Activated naive CD4-positive, alpha-beta T cell treated with anti-CD3 and anti-CD28 coated beads for 36 hours (primary cell): ENCODE measurements at regions of chr2 and their contacts with region 1.

Region 1: DNA sequence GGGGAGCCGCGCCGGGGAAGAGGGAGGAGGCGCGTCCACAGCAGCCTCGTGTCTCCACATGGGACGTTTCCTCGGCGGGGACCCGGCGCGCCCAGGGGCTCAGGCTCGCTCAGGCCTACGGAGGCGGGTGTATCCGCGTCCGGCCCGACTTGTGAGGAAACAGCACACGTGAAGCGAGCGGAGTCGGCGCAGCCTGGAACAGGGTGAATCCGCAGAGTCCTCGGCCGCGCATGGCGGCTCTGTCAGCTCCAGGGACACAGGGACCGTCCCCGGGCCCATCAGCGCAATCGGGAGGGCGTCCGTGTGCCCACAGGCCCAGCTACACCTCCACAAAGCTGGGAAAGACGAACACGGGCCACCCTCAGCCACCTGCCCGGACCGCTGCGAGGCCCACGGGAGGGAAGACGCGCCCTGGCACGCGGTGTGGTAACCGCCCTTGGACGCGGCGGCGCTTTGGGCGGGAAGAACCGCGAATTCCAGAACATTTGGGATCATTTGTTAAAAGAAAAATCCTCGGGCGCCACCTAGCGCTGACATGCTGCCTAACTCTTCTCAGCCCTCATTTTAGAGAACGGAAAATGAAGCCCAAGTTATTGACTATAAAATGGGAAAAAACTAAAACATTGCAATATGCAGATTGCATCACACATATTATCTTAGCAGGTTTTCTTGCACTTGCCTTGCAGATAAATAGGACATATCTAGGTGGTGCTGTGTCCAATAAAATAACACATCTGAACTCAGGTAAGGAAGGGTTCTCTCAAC is 40.4 kb downstream of the TMEM18 start:
- DNase-seq: peak; percentile 69
- H3K4me3 Mint-ChIP-seq: peak overlapping the region; percentile 64
- H3K27ac Mint-ChIP-seq: no peak overlapping the region
- H3K4me1 Mint-ChIP-seq: peaks cover 5% of the 10 kb centered on the region
- H3K27me3 Mint-ChIP-seq: no peaks in the 10 kb centered on the region

Region 2: DNA sequence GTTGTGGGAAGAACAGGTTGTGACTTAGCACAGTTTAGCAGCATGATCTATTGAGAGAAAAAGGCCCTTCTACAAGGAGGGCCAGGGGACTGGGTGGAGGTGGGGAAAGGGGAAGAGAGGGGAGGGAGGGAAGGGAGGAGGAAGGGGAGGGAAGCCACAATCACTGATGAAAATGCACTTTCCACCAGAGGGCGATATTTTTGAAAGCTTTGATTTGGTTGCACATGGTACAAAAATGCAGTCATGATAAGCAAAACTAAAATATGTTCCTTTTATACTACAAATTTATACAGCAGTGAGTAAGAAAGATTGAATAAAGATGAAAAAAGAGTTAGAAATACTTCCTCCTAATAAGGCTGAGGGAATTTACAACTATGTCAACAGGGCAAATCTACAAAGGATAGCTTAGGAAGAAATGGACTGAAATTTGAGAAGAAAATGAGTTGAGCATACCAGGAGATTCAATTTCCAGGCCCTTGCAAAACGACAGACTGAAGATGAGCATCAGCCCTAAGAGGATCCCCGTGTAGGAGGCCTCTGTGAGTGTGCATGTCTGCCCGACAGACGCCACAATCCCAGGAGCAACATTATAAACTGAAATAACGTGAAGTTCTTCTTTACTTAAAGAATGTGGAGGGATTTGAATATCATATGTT is 390.2 kb before region 1 on chr2:
- CTCF ChIA-PET with region 1: interaction called, 10 read pairs
- intact Hi-C with region 1: loop called (anchors 1 kb)
- DNase-seq: peak; percentile 51
- H3K4me3 Mint-ChIP-seq: no peak overlapping the region
- H3K27ac Mint-ChIP-seq: no peak overlapping the region
- H3K4me1 Mint-ChIP-seq: peaks cover 5% of the 10 kb centered on the region
- H3K27me3 Mint-ChIP-seq: no peaks in the 10 kb centered on the region

Region 3: DNA sequence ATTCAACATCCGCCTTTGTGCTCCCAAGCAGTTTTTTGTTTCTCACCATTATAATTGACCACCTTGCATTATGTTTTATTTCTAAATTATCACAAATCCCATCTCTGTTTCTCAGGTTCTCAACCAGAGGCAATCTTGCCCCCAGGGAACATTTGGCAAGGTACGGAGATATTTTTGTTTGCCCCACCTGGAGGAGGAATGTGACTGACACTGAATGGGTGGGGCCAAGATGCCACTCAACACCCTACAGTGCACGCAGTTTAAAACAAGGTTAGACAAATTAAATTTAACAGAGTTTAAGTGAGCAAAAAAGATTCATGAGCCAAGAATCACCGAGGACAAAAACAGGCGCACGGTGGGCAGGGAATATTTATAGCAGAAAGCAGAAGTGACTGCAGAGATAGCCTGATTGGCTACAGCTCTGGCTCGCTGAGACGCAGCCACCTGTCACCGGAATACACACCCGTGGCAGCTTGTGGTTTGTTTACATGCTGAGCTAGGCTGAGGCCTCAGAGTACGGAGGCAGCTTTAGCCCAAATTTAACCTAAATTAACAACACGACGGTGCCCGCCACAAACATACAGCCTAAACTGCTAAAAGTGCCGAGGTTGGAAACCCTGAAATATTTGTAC is 198.9 kb before region 1 on chr2:
- CTCF ChIA-PET with region 1: no interaction called
- intact Hi-C with region 1: loop called (anchors 10 kb)
- DNase-seq: peak; percentile 64
- H3K4me3 Mint-ChIP-seq: peak overlapping the region; percentile 65
- H3K27ac Mint-ChIP-seq: no peak overlapping the region
- H3K4me1 Mint-ChIP-seq: peaks cover 9% of the 10 kb centered on the region
- H3K27me3 Mint-ChIP-seq: no peaks in the 10 kb centered on the region

Region 4: GRCh38 chr2:584863-585823 is 51.7 kb before region 1 on chr2:
- CTCF ChIA-PET with region 1: interaction called, 3 read pairs
- intact Hi-C with region 1: loop called (anchors 2 kb)
- DNase-seq: peak; percentile 59
- H3K4me3 Mint-ChIP-seq: peak overlapping the region; percentile 8
- H3K27ac Mint-ChIP-seq: no peak overlapping the region
- H3K4me1 Mint-ChIP-seq: peaks cover 11% of the 10 kb centered on the region
- H3K27me3 Mint-ChIP-seq: peaks cover 9% of the 10 kb centered on the region

Region 5: DNA sequence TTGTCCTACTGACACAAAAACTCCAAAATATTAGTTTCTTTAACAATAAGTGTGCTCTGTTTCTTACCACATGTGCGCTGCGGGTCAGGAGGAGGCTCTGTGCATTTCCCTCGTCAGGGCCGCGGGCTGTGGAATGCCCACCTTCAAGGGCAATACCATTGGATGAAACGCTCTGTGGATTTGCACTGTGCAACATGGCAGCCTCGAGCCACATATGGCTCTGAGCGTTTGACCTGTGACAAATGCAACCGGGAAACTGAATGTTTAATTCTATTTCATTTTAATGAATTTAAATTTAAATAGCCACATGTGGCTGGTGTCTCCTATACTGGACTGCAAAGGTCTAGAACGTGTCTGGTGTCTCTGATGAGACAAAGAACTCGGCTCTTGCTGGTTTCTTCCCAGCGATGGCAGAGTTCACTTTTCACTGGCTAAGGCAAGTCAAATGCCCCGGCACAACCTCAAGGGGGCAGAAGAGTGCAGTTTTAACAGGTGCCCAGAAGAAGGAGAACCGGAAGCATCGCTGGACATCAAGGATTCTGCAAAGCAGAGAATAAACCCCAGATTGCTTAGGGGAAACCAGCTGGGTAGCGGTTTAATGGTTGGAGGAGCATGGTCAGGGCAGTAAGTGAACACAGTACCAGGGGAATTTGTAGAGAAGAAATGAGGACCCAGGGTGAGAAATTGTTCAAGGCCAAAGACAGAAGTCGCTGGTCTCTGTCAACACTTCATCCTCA is 77.3 kb after region 1 on chr2:
- CTCF ChIA-PET with region 1: no interaction called
- intact Hi-C with region 1: no loop called
- DNase-seq: peak; percentile 58
- H3K4me3 Mint-ChIP-seq: no peak overlapping the region
- H3K27ac Mint-ChIP-seq: no peak overlapping the region
- H3K4me1 Mint-ChIP-seq: no peaks in the 10 kb centered on the region
- H3K27me3 Mint-ChIP-seq: peaks cover 27% of the 10 kb centered on the region

Region 6: DNA sequence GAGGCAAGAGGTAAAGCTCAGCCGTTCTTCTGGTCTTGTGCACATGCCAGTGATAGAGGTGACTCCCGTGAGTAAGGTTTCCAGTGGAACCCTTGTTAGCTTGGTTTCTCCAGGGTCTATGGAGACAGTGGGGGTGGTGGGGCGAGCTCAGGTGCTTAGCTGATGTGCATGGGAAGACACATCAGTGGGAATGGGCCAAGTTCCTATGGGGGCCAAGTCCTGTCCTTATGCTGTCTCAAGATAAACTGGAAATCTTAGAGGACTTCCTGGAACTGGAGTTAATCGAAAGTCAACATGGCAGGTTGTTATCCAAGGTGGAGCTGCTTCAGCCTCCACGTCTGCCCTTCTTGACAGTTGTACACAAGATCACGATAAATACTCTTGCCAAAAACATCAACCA is 170.5 kb after region 1 on chr2:
- CTCF ChIA-PET with region 1: no interaction called
- intact Hi-C with region 1: no loop called
- DNase-seq: no peak
- H3K4me3 Mint-ChIP-seq: no peak overlapping the region
- H3K27ac Mint-ChIP-seq: no peak overlapping the region
- H3K4me1 Mint-ChIP-seq: no peaks in the 10 kb centered on the region
- H3K27me3 Mint-ChIP-seq: no peaks in the 10 kb centered on the region